ENCODE measurements at regions of chr2 and their contacts with region 1.

Region 1: DNA sequence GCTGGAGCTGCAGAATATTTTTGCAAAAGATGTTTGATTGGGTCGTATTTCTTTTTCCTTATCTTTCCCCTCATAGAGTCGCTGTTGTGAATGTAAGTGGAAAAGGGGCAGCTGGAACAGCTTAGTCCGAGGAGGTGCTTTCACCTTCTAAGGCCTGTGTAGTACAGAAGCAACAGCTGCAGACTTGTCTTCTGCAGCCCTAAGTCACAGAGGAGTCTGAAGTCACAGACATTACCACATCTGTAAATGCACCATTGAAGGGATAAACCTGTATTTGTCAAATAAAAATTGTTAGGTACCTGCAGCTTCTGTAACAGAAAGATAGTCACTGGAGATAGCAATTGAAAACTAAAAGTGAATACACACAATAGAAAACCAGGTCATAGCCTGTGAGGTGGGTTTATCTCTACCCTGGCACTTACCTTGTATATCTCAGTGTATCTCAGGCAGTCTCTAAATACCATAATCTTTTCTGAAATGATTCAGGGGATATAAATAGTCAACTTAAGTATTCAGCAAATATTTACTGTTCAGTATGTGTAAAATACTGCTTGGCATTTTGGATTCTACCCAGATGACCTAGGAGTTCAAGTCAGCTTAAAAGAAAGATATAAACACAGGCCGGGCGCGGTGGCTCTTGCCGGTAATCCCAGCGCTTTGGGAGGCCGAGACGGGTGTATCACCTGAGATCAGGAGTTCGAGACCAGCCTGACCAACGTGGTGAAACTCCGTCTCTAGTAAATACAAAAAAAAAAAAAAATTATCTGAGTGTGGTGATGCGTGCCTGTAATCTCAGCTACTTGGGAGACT is 23.7 kb downstream of the GRHL1 start:
- DNase-seq: peak; percentile 63
- ATAC-seq: peak; percentile 70
- H3K4me3 ChIP-seq: no peak overlapping the region
- H3K27ac ChIP-seq: no peak overlapping the region; the same call in 1 of the 2 replicates
- H3K4me1 ChIP-seq: peaks cover 35% of the 10 kb centered on the region
- H3K27me3 ChIP-seq: no peaks in the 10 kb centered on the region
- CTCF ChIP-seq: no peak

Region 2: GRCh38 chr2:9857814-9858729 is 117.1 kb before region 1 on chr2:
- CTCF ChIA-PET with region 1: no interaction called
- POLR2A ChIA-PET with region 1: no interaction called
- in situ Hi-C with region 1: no loop called
- intact Hi-C with region 1: no loop called
- DNase-seq: no peak
- ATAC-seq: no peak
- H3K4me3 ChIP-seq: no peak overlapping the region
- H3K27ac ChIP-seq: no peak overlapping the region
- H3K4me1 ChIP-seq: no peaks in the 10 kb centered on the region
- H3K27me3 ChIP-seq: no peaks in the 10 kb centered on the region
- CTCF ChIP-seq: no peak

Region 3: GRCh38 chr2:9914384-9915065 is 60.7 kb before region 1 on chr2:
- CTCF ChIA-PET with region 1: no interaction called
- POLR2A ChIA-PET with region 1: interaction called, 11 read pairs
- in situ Hi-C with region 1: no loop called
- intact Hi-C with region 1: no loop called
- DNase-seq: peak; percentile 82
- ATAC-seq: peak; percentile 100
- H3K4me3 ChIP-seq: no peak overlapping the region
- H3K27ac ChIP-seq: peak overlapping the region; percentile 67
- H3K4me1 ChIP-seq: peaks cover 13% of the 10 kb centered on the region
- H3K27me3 ChIP-seq: no peaks in the 10 kb centered on the region
- CTCF ChIP-seq: peak; percentile 36; the same call in 1 of the 2 replicates

Measured in Panc1 (cell line).